ENCODE measurements at regions of chr16 and their contacts with region 1.

Region 1: DNA sequence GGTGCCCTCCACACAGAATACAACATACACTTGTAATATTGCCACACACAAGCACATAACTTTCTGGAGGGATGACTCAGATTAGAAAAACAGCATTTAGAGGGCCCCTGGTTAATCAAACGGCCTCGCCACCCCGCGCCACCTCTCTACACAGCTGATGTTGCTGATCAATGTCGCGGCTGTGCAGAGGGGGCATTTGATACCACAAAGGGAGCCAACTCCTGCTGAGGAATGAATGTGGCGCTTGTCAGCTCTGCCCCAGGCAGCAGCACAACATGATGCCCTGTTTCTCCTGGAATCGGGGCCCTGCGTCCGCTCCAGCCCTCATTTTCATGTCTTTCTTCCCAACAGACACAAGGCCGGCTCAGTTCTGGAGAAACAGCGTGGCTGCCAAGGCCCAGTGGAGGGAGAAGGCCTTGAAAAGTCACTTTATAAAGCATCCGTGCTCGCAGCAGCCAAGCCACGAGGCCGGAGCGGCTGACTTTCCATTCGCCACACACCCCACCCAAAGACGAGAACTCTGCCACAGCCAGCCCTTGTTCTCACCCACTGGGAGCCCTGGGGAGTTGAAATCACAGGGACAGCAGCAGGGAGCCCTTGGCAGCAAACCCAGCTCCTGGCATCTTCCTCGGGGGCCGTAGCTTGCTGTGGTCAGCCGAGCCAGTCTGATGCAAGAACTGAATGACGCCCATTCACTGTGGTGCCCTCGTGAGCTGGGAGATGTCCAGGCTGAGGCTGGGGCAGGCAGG is 65.6 kb downstream of the XYLT1 start:
- DNase-seq: peak; percentile 46 to 56
- ATAC-seq: peak; percentile 64 to 85 (median 82)
- H3K4me3 ChIP-seq: no peak overlapping the region
- H3K27ac ChIP-seq: peak overlapping the region in 8 of 10 donors; percentile 12 to 67 (median 58)
- H3K4me1 ChIP-seq: peaks cover 0 to 24% (median 7%) of the 10 kb centered on the region in 9 donors
- H3K27me3 ChIP-seq: no peaks in the 10 kb centered on the region
- CTCF ChIP-seq: no peak

Region 2: DNA sequence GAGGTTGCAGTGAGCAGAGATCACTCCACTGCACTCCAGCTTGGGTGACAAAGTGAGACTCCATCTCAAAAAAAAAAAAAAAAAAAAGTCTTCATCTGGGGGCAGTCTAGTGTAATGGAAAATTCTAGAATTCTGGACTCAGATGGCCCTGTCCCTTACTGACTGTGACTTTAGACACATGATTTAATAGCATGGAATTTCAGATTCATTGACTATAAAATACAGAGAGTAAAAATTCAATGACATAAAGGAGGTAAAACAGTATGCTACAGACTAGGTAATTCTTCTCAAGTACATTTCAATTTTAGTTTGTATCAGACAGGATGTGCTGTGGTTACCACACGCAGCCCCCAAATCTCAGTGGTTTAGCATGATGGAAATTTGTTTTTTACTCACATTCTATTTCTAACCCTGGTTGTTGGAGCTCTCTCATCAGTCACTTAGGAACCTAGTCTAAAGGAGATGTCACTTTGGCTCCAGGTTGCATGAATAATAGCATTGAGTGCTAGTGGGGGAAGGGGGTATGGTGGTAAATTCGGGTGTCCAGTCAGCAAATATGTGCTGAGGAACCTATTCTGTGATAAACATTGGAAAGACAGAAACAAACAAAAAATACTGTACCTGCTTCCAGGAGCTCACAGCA is 378.4 kb before region 1 on chr16:
- intact Hi-C with region 1: loop called in 1 of 10 experiments (anchors 5 kb)
- DNase-seq: no peak
- ATAC-seq: no peak
- H3K4me3 ChIP-seq: no peak overlapping the region
- H3K27ac ChIP-seq: no peak overlapping the region
- H3K4me1 ChIP-seq: no peaks in the 10 kb centered on the region
- H3K27me3 ChIP-seq: peaks cover 0 to 11% (median 8%) of the 10 kb centered on the region in 7 donors
- CTCF ChIP-seq: no peak

Measured in heart right ventricle (tissue), 16 donors.